SK-N-SH (cell line): ENCODE measurements at regions of chr19 and their contacts with region 1.

Region 1: DNA sequence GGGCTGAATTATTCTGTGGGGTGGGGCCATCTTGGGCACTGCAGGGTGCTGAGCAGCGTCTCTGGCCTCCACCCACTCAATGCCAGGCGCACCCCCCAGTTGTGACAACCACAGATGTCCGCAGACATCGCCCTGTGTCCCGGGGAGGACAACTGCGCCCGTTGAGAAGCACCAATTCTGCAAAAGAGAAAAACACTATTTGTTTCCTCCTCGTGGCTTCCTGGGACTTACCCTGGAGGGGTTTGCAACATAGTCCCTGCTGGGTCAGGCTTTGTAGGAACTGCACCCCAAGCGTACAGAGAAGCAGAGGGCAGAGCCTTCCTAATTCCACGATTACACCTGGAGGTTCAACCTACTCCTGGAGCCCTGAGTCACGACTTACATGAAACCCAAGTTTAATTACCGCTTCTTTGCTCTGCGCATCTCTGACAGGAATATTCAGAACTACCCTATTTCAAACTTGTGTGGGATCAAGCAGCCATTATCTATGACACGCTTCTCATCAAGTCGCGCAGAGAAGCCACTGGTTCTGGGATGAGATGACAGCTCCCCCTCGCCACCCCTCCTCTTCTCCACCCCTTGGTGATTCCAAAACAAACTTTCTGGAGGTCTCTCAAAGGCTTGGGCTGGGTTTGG is 11.1 kb upstream of the SLC39A3 start:
- DNase-seq: no peak
- H3K4me3 ChIP-seq: no peak overlapping the region
- H3K27ac ChIP-seq: no peak overlapping the region
- H3K4me1 ChIP-seq: peaks cover 0 to 3% of the 10 kb centered on the region in 2 experiments; a peak in 1 of 4 replicates
- H3K27me3 ChIP-seq: no peaks in the 10 kb centered on the region
- CTCF ChIP-seq: no peak
- EP300 ChIP-seq: no peak
- RAD21 ChIP-seq: no peak

Region 2: DNA sequence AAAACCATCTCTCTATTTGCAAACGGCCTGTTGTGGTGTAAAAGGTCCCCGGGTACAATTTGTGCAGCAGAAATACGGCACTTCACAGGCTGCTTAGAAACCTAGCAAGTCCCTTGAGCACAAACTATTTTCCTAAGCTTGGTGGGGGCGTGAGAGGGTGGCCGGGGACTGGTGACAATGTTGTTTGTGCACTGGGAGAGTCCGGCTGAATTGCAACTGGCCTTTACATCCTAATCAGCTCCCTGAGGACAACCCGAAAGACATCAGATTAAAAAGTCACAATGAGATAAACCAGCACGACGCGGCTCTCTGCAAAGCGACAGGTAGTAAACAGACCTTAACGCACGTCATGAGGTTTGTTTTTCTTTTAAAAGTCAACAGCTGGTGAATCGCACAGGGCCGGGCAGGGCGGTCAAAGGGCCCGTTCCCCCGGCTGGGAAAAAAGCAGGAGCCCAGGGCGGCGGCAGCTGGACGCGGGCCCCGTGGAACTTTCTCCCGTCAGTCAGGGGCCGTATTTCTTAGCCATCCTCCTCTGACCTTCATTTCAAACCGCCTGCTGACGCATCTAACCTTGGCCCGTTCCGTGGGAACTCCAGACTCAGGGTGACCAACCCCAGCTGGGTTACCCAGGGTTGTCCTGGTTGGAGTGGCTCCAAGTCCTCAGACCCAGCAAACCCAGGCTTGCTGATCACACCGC is 162.7 kb before region 1 on chr19:
- CTCF ChIA-PET with region 1: no interaction called
- POLR2A ChIA-PET with region 1: no interaction called
- DNase-seq: no peak
- H3K4me3 ChIP-seq: no peak overlapping the region
- H3K27ac ChIP-seq: no peak overlapping the region
- H3K4me1 ChIP-seq: no peaks in the 10 kb centered on the region
- H3K27me3 ChIP-seq: no peaks in the 10 kb centered on the region
- CTCF ChIP-seq: no peak
- EP300 ChIP-seq: no peak
- RAD21 ChIP-seq: no peak

Region 3: GRCh38 chr19:2722541-2723344 is 28.2 kb before region 1 on chr19:
- CTCF ChIA-PET with region 1: interaction called, 19 read pairs
- POLR2A ChIA-PET with region 1: no interaction called
- DNase-seq: peak; percentile 30
- H3K4me3 ChIP-seq: no peak overlapping the region
- H3K27ac ChIP-seq: peak overlapping the region in 1 of 2 experiments; percentile 23; a peak in 1 of 4 replicates
- H3K4me1 ChIP-seq: peaks cover 15 to 21% of the 10 kb centered on the region in 2 experiments; a peak in 3 of 4 replicates
- H3K27me3 ChIP-seq: no peaks in the 10 kb centered on the region
- CTCF ChIP-seq: no peak
- EP300 ChIP-seq: no peak
- RAD21 ChIP-seq: no peak

Region 4: GRCh38 chr19:2739602-2740313 is 11.2 kb before region 1 on chr19 and contains the start of gene SLC39A3:
- CTCF ChIA-PET with region 1: interaction called, 23 read pairs
- POLR2A ChIA-PET with region 1: no interaction called
- DNase-seq: peak; percentile 100
- H3K4me3 ChIP-seq: peak within 1 kb of the TSS; percentile 84 to 94
- H3K27ac ChIP-seq: no peak within 1 kb of the TSS; a peak in 1 of 4 replicates
- H3K4me1 ChIP-seq: peaks cover 0 to 5% of the 10 kb centered on the region in 2 experiments; a peak in 1 of 4 replicates
- H3K27me3 ChIP-seq: peaks cover 1% of the 10 kb centered on the region; the same call in 1 of the 2 replicates
- CTCF ChIP-seq: no peak
- EP300 ChIP-seq: no peak
- RAD21 ChIP-seq: no peak
- polyA plus RNA-seq, gene SLC39A3: 42.2 and 45.2 TPM in 2 replicates

Region 5: GRCh38 chr19:2782936-2783780 is 32.2 kb after region 1 on chr19 and contains the start of gene SGTA:
- CTCF ChIA-PET with region 1: interaction called, 19 read pairs
- POLR2A ChIA-PET with region 1: no interaction called
- DNase-seq: peak; percentile 99
- H3K4me3 ChIP-seq: peak within 1 kb of the TSS; percentile 93 to 99
- H3K27ac ChIP-seq: peak within 1 kb of the TSS; percentile 69 to 85
- H3K4me1 ChIP-seq: peaks cover 4 to 25% of the 10 kb centered on the region in 2 experiments; a peak in 2 of 4 replicates
- H3K27me3 ChIP-seq: no peaks in the 10 kb centered on the region
- CTCF ChIP-seq: peak; percentile 38
- EP300 ChIP-seq: no peak
- RAD21 ChIP-seq: no peak
- polyA plus RNA-seq, gene SGTA: 60.4 and 78.4 TPM in 2 replicates

Region 6: GRCh38 chr19:2817313-2817712 is 66.4 kb after region 1 on chr19:
- CTCF ChIA-PET with region 1: no interaction called
- POLR2A ChIA-PET with region 1: no interaction called
- DNase-seq: no peak
- H3K4me3 ChIP-seq: no peak overlapping the region
- H3K27ac ChIP-seq: no peak overlapping the region
- H3K4me1 ChIP-seq: peaks cover 0 to 23% of the 10 kb centered on the region in 2 experiments; a peak in 1 of 4 replicates
- H3K27me3 ChIP-seq: no peaks in the 10 kb centered on the region
- CTCF ChIP-seq: no peak
- EP300 ChIP-seq: no peak
- RAD21 ChIP-seq: no peak

Region 7: GRCh38 chr19:2867025-2867991 is 116.4 kb after region 1 on chr19 and contains the start of gene ZNF556:
- CTCF ChIA-PET with region 1: no interaction called
- POLR2A ChIA-PET with region 1: no interaction called
- DNase-seq: peak; percentile 99
- H3K4me3 ChIP-seq: peak within 1 kb of the TSS; percentile 66 to 73
- H3K27ac ChIP-seq: peak within 1 kb of the TSS in 1 of 2 experiments; percentile 48; a peak in 1 of 4 replicates
- H3K4me1 ChIP-seq: no peaks in the 10 kb centered on the region; a peak in 1 of 4 replicates
- H3K27me3 ChIP-seq: no peaks in the 10 kb centered on the region
- CTCF ChIP-seq: no peak
- EP300 ChIP-seq: no peak
- RAD21 ChIP-seq: no peak
- polyA plus RNA-seq, gene ZNF556: 0.46 and 0.67 TPM in 2 replicates